Esophagus muscularis mucosa (tissue), 4 donors: ENCODE measurements at regions of chr21 and their contacts with region 1.

Region 1: DNA sequence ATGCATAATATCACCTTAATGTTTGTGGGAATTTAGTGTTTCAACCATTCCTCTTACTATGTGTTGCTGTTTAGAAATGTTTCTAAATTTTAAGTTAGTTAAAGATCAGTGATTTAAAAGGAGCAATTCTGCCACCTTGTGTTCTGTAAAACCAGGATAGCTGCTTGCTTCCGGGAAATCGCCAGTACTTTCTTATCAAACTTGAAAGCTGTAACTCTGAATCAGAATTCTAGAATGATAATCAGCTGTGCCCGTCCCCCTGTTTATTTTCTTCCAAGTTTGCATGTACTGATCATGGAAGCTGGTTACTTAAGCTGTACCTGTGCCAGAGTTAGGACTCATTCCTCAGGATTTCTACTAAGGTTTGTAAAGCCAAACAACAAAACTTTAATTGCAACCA is 656.4 kb downstream of the LTN1 start:
- DNase-seq: no peak
- H3K4me3 ChIP-seq: no peak overlapping the region
- H3K27ac ChIP-seq: peak overlapping the region in 1 of 4 donors; percentile 24
- H3K4me1 ChIP-seq: peaks cover 13 to 34% (median 28%) of the 10 kb centered on the region in 4 donors
- H3K27me3 ChIP-seq: no peaks in the 10 kb centered on the region
- CTCF ChIP-seq: peak; percentile 57 to 63 (median 62)
- EP300 ChIP-seq: no peak
- POLR2A ChIP-seq: no peak

Region 2: DNA sequence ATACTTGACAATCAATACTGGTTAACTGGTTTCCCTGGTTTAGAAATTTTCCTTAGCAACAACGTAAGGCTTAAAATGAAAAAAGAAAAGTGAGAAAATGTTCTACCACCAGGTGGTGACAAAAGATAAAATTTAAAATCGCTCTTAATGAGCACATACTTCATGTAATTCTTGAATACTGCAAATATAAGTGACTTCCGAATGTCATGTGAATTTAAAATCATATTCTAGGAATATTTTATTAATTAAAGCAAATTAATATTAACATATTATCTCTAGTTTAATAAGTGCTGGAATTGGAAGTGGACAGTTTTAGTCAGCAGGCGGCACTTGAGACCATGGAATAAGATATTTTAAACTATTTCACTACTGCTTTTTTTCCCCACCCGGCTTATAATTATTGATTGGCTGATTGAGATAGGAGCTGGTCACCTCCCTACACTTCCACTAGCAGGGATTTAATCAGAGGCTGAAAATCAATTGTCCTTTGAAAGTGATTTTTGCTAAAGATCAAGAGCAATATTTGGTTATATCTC is 1486.1 kb before region 1 on chr21:
- intact Hi-C with region 1: loop called (anchors 5 kb)
- DNase-seq: no peak
- H3K4me3 ChIP-seq: peak overlapping the region in 2 of 4 donors; percentile 1 to 21
- H3K27ac ChIP-seq: no peak overlapping the region
- H3K4me1 ChIP-seq: peaks cover 9 to 20% (median 16%) of the 10 kb centered on the region in 4 donors
- H3K27me3 ChIP-seq: no peaks in the 10 kb centered on the region
- CTCF ChIP-seq: peak; percentile 69 to 84 (median 79)
- EP300 ChIP-seq: no peak
- POLR2A ChIP-seq: no peak

Region 3: GRCh38 chr21:27700974-27701614 is 635.2 kb before region 1 on chr21:
- intact Hi-C with region 1: loop called (anchors 5 kb)
- DNase-seq: no peak
- H3K4me3 ChIP-seq: no peak overlapping the region
- H3K27ac ChIP-seq: no peak overlapping the region
- H3K4me1 ChIP-seq: peaks cover 0 to 27% (median 4%) of the 10 kb centered on the region in 4 donors
- H3K27me3 ChIP-seq: no peaks in the 10 kb centered on the region
- CTCF ChIP-seq: peak; percentile 81 to 93 (median 93)
- EP300 ChIP-seq: no peak
- POLR2A ChIP-seq: no peak

Region 4: DNA sequence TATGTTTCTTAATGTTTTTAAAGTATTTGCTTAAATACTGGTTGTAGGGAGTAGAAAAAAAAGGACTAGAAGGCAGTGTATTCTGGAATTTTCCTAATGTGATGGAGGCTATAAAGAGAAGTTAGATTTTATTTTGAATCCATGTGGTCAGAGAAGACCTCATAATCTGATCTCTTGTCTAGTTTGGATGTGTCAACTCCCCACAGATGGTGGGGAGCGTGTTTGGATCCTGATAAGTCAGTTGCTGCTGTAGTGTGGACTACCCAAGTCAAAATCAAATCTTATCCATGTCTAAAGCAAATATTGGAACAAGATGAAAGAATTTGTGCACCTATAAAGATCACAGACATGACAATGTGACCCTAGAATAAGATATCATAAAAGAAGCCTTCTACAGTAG is 261.6 kb before region 1 on chr21:
- intact Hi-C with region 1: loop called (anchors 10 kb)
- DNase-seq: no peak
- H3K4me3 ChIP-seq: no peak overlapping the region
- H3K27ac ChIP-seq: no peak overlapping the region
- H3K4me1 ChIP-seq: peaks cover 0 to 10% (median 9%) of the 10 kb centered on the region in 4 donors
- H3K27me3 ChIP-seq: no peaks in the 10 kb centered on the region
- CTCF ChIP-seq: no peak
- EP300 ChIP-seq: no peak
- POLR2A ChIP-seq: no peak